ENCODE measurements at regions of chrX and their contacts with region 1.

Region 1: DNA sequence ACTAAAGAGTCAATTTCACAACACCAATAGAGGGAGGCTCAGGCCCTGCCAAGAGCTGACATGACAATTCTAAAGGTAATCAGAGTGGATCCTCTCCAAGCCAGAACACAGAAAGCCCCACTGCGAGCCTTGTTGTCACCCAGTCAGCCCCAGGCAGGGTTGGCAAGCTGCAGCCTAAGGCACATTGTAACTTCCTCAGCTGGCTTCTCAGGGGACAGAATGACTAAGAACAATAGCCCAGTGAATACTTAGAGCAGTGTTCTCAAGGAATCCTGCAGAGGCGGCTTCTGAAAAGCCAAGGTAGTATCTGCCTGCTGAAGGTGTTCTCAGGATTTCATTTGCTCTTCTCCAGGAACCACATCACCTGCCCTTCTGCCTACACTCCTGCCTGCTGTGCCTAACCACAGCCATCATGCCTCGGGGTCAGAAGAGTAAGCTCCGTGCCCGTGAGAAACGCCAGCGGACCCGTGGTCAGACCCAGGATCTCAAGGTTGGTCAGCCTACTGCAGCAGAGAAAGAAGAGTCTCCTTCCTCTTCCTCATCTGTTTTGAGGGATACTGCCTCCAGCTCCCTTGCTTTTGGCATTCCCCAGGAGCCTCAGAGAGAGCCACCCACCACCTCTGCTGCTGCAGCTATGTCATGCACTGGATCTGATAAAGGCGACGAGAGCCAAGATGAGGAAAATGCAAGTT is at the start of gene MAGEB4:
- DNase-seq: no peak
- total RNA-seq, gene MAGEB4: not detected

Region 2: GRCh38 chrX:30304866-30305265 is 63.0 kb after region 1 on chrX:
- intact Hi-C with region 1: loop called in 1 of 2 experiments (anchors 2 kb)
- DNase-seq: no peak